ENCODE measurements at regions of chr3 and their contacts with region 1.

Region 1: DNA sequence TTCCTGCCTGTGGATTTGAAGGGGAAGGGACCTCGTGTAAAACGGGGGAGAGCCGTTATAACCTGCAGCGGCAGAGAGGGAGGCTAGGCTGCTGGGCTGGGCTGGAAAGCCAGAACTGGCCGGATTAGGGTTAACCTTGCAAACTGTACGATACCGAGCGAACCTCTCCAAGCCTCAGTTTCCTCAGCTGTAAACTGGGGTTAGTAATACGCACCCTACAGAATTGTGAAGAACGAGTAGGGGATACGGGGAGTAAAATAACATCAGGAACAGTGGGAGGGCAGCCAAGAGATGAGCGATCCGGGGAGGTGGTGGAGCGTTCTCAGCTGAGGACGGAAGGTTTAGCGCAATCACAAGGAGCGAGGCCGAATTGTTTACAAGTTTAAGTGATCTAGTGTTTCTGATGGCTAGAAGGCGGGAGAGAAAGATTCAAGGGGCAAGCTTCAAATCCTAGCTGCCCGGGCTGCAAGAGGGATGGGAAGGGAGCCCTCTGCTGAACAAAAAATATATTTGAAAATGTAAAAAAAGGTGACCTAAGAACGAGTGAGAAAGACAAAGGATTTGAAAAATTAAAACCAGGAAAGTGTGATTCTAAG is 768 bp upstream of the SEMA5B start:
- DNase-seq: peak; percentile 27 to 64 (median 45)
- H3K4me3 ChIP-seq: peak overlapping the region; percentile 43
- H3K27ac ChIP-seq: peak overlapping the region in 1 of 2 donors; percentile 17
- H3K4me1 ChIP-seq: peaks cover 6% of the 10 kb centered on the region
- H3K27me3 ChIP-seq: no peaks in the 10 kb centered on the region
- CTCF ChIP-seq: peak; percentile 26 to 53 (median 40)
- EP300 ChIP-seq: no peak
- POLR2A ChIP-seq: no peak

Region 2: DNA sequence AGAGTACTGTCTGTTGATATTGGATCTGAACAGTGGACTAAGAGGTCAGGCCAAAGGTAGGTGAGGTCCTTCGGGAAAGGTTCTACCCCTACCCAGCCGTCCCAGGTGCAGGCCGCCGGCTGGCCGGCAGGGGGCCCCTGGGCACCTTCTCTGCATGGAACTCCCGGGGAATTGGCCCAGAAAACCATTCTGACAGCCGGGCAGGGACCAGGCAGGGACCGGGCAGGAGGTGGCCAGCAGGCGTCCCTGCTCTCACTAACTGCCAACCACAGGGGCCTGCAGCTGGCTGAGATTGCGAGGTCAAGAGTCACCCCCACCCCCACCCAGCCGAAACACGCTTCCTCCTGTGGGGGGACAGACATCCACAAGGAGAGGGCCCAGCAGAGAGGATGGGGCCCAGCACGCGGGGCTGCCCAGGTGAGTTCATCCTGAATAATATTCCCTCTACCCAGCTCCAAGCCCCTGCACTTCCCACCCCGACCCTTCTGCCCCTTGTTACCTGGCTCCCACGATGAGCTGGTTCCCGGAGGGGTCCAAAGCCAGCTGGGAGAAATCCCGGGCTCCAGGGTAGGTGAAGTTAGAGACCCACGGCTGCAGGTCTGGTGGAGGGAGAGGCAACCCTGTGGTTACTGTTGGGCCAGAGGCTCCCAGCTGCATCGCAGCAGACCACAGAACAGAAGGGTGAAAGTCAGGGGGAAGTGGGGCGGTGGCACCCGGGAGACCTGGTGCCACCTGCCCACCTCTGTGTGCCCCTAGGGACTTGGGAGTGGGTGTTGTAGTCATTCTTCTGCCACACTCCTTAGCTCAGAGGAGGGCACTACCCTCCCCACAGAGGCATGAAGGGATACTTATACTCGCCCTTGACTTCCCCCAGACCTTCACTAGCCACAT is 85.1 kb before region 1 on chr3:
- intact Hi-C with region 1: loop called in 1 of 4 experiments (anchors 10 kb)
- DNase-seq: peak in 4 of 5 donors; percentile 35 to 59 (median 47)
- H3K4me3 ChIP-seq: no peak overlapping the region
- H3K27ac ChIP-seq: no peak overlapping the region
- H3K4me1 ChIP-seq: peaks cover 3% of the 10 kb centered on the region
- H3K27me3 ChIP-seq: no peaks in the 10 kb centered on the region
- CTCF ChIP-seq: peak in 2 of 3 donors; percentile 49 to 57
- EP300 ChIP-seq: no peak
- POLR2A ChIP-seq: no peak

Region 3: DNA sequence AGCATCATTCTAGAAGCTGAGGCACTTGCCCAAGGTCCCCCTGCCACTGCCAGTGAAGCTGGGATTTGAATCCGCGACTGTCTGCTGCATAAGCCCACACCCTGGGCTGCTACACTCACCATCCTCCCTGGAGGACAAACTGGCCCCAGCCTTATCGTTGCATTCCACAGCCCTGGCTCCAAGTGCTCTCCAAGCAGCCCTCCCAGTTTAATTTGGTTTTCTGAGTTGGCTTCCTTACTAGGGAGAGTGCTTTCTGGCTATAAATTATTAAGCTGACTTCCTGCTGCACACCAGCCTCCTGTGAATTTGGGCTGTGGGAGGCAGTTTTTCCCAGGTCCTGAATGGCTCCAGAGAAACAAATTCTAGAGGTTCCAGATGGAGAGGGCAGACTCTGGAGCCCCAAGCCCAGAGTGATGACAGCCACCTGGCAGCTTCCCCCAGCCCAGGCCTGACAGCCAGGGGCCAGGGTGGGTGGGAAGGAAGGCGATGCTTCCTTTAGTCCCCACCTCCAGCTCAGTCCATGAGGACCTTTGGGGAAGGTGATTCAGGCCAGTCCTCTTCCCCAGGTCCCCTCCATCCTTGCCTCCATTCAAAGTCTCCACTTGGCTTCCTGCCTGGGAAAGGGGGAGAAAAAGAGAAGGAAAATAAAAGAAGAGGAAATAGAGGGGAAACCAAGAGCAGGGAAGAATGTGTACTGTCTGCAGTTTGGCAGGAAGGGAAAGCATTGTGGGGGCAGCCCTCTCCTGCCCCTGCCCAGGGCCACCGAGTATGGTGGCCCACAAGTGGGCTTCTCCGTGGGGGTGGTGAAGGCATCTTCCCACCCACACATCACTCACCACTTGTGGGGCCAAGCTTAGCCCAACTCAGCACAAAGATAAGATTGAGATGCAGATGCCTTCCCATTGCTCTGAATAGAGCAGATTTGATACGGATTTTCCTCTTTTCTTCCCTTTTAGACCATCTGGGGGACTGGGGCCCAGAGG is 70.3 kb before region 1 on chr3:
- intact Hi-C with region 1: loop called in 1 of 4 experiments (anchors 5 kb)
- DNase-seq: peak in 2 of 5 donors; percentile 46 to 55
- H3K4me3 ChIP-seq: no peak overlapping the region
- H3K27ac ChIP-seq: no peak overlapping the region
- H3K4me1 ChIP-seq: peaks cover 6% of the 10 kb centered on the region
- H3K27me3 ChIP-seq: no peaks in the 10 kb centered on the region
- CTCF ChIP-seq: no peak
- EP300 ChIP-seq: no peak
- POLR2A ChIP-seq: no peak

Region 4: GRCh38 chr3:123054109-123054778 is 25.9 kb after region 1 on chr3:
- intact Hi-C with region 1: no loop called
- DNase-seq: no peak
- H3K4me3 ChIP-seq: no peak overlapping the region
- H3K27ac ChIP-seq: no peak overlapping the region
- H3K4me1 ChIP-seq: peaks cover 1% of the 10 kb centered on the region
- H3K27me3 ChIP-seq: no peaks in the 10 kb centered on the region
- CTCF ChIP-seq: no peak
- EP300 ChIP-seq: no peak
- POLR2A ChIP-seq: no peak